ENCODE measurements at regions of chr7 and their contacts with region 1.

Region 1: GRCh38 chr7:54985405-54986330 is 33.1 kb upstream of the EGFR start:
- DNase-seq: no peak
- H3K4me3 ChIP-seq: no peak overlapping the region
- H3K27ac ChIP-seq: no peak overlapping the region
- H3K4me1 ChIP-seq: peaks cover 8% of the 10 kb centered on the region
- H3K27me3 ChIP-seq: peaks cover 19 to 52% of the 10 kb centered on the region in 2 experiments
- CTCF ChIP-seq: no peak
- POLR2A ChIP-seq: no peak

Region 2: DNA sequence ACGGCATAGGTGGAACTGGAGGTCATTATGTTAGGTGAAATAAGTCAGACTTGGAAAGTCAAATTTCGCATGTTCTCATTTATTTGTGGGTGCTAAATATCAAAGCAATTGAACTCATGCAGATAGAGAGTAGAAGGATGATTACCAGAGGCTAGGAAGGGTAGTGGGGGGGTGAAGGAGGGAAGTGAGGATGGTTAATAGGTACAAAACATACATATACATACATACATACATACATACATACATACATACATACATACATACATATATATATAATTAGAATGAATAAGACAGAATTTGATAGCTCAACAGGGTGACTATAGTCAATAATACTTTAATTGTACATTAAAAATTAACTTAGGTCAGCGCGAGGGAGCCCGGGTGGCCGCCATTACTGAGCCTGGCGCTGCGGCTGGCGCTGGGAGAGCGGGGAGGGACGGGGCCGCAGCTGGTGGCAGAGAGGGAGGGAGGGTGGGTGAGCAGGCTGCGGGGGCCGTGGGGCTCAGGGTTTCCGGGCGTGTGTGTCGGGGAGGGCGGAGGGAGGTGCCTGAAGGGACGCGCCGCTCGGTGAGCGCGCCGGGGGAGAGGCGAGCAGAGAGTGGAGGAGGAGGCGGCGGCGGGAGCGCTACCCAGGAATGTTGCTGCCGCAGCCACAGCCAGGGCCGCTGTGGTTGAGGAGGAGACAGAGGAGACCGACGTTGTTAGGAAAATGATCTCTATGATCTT is 52.7 kb before region 1 on chr7:
- CTCF ChIA-PET with region 1: no interaction called
- POLR2A ChIA-PET with region 1: no interaction called
- dilution Hi-C with region 1: no loop called
- intact Hi-C with region 1: loop called (anchors 5 kb)
- DNase-seq: peak; percentile 28
- H3K4me3 ChIP-seq: peak overlapping the region; percentile 29 to 61 (median 41)
- H3K27ac ChIP-seq: no peak overlapping the region
- H3K4me1 ChIP-seq: peaks cover 5% of the 10 kb centered on the region
- H3K27me3 ChIP-seq: peaks cover 18 to 51% of the 10 kb centered on the region in 2 experiments
- CTCF ChIP-seq: no peak
- POLR2A ChIP-seq: no peak

Region 3: DNA sequence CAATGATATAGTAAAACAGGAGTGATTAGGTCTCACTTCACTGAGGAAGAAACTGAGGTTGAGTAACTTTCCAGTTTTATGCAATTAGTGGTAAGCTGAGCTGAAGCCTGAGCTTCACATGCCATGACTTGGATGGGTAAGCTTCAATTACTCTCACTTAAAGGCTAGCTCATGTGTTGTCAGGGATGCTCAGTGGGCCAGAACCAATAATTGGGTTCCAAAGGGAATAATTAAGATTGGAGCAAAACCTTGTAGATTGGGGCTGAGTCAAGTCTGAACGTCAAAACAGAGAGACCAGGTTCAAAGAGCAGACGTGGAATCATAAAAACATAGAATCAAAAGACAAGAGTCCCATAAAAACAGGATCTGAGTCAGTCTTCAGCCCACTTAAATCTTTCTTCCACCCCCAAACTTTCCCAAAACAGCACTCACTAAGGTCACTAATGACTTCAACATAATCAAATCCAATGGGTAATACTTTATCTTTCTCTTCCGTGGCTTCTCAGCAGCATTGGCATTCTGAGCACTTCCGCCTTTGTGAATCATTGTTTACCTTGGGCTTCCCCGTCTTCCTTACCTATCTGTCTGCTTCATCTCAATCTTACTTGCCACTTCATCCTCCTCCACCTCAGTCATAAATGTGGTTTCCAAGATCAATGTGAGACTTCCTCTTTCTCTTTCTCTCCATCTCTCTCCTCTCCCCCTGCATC is 10.1 kb after region 1 on chr7:
- CTCF ChIA-PET with region 1: interaction called, 6 read pairs
- POLR2A ChIA-PET with region 1: no interaction called
- dilution Hi-C with region 1: no loop called
- intact Hi-C with region 1: loop called (anchors 1 kb)
- DNase-seq: peak; percentile 80
- H3K4me3 ChIP-seq: no peak overlapping the region
- H3K27ac ChIP-seq: peak overlapping the region; percentile 15
- H3K4me1 ChIP-seq: peaks cover 20% of the 10 kb centered on the region
- H3K27me3 ChIP-seq: peaks cover 4% of the 10 kb centered on the region in 2 experiments
- CTCF ChIP-seq: no peak
- POLR2A ChIP-seq: peak; percentile 52

Measured in endothelial cell of umbilical vein (primary cell).